ENCODE measurements at regions of chr3 and their contacts with region 1.

Region 1: DNA sequence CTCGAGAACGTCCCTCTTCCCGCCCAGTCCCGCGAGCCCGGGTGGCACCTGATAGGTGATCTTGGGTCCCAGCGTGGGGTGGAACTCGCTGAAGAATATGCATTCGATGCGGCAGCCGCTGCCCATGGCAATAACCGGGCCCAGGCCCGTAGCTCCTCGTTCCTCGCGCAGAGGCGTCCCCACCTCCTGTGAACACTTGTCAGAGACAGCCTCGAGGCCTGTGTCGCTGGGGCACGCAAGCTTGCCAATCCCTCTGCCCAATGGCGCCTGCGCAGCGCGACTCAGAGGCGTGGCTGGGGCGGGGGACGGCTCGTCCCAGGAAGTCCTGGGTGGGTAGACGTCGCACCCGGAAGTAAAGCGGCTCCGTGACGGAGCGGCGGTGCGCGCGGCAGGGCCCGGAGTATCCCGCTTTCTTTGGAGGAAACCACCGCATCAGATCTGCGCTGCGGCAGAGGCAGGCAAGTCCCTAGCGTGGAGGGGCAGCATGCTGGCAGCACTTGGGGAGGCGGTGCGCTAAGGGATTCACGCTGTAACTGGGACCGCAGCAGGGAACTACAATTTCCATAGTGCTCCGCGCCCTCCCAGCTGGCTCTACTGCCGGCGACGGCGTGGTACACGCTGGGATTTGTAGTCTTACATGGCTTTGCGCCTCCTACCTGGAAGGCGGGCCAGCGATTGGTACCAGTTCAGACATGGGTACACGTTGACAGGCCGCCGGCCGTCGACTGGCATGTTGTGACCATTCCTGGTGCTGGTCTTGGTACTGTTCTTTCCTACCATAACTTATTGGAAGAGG is at the starts of genes CYB561D2 and NPRL2:
- DNase-seq: peak; percentile 90
- ATAC-seq: peak; percentile 91
- H3K4me3 ChIP-seq: peak within 1 kb of the TSS; percentile 68 to 85 (median 77)
- H3K27ac ChIP-seq: peak within 1 kb of the TSS; percentile 65
- H3K4me1 ChIP-seq: peaks cover 58% of the 10 kb centered on the region
- H3K27me3 ChIP-seq: no peaks in the 10 kb centered on the region
- CTCF ChIP-seq: peak; percentile 4
- EP300 ChIP-seq: no peak; a peak in 1 of 4 replicates
- POLR2A ChIP-seq: peak in 1 of 2 experiments; percentile 72; a peak in 2 of 4 replicates
- RAD21 ChIP-seq: peak; percentile 52
- total RNA-seq, gene CYB561D2: 9.1 and 17.2 TPM in 2 replicates
- total RNA-seq, gene NPRL2: 25.3 and 30.6 TPM in 2 replicates

Region 2: GRCh38 chr3:50327943-50328691 is 22.6 kb before region 1 on chr3 and contains the start of gene TUSC2:
- CTCF ChIA-PET with region 1: no interaction called
- POLR2A ChIA-PET with region 1: interaction called, 10 read pairs
- in situ Hi-C with region 1: no loop called
- intact Hi-C with region 1: no loop called
- DNase-seq: peak; percentile 95
- ATAC-seq: peak; percentile 79
- H3K4me3 ChIP-seq: peak within 1 kb of the TSS; percentile 79 to 95 (median 92)
- H3K27ac ChIP-seq: peak within 1 kb of the TSS; percentile 67
- H3K4me1 ChIP-seq: peaks cover 52% of the 10 kb centered on the region
- H3K27me3 ChIP-seq: no peaks in the 10 kb centered on the region
- CTCF ChIP-seq: no peak; the same call in 1 of the 2 replicates
- EP300 ChIP-seq: no peak
- POLR2A ChIP-seq: peak in 1 of 2 experiments; percentile 80; a peak in 2 of 4 replicates
- RAD21 ChIP-seq: peak; percentile 39; the same call in 1 of the 2 replicates
- total RNA-seq, gene TUSC2: 35.9 and 36.7 TPM in 2 replicates

Region 3: DNA sequence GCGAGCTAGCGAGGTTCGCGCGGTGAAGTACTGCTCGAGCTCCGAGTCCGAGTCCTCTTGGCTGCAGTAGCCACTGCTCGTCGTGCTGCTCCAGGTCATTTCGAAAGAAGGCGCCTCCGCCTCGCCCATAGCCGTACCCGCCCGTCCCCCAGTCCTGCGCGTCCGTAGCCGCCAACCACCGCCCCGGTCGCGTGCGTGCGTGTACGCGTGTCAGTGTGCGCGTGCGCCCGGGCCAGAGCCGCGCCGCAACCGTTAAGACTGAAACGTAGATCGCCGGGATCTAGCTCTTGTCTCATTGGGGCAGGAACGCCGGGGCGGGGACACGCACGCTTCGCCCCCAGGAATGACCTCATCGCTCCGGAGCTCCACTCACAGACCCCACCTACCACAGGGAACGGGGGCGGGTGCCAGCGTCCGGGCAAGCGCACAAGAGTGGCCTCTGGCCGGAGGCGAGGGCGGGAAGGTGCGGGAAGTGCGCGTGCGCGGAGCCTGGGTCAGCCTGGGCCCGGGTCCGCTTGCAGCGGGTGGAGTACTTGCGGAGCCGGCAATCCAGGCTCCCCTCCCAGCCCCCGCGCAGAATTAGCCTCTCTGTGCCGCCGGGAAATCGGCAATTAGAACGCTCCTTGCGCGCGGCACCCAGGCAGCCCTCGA is 13.4 kb before region 1 on chr3:
- CTCF ChIA-PET with region 1: no interaction called
- POLR2A ChIA-PET with region 1: interaction called, 60 read pairs
- in situ Hi-C with region 1: no loop called
- intact Hi-C with region 1: no loop called
- DNase-seq: peak; percentile 98
- ATAC-seq: peak; percentile 89
- H3K4me3 ChIP-seq: peak overlapping the region; percentile 86 to 89 (median 88); a peak in 5 of 6 replicates
- H3K27ac ChIP-seq: peak overlapping the region; percentile 85
- H3K4me1 ChIP-seq: peaks cover 58% of the 10 kb centered on the region
- H3K27me3 ChIP-seq: peaks cover 1 to 2% of the 10 kb centered on the region in 2 experiments; a peak in 1 of 5 replicates
- CTCF ChIP-seq: peak; percentile 2; the same call in 1 of the 2 replicates
- EP300 ChIP-seq: no peak
- POLR2A ChIP-seq: peak in 1 of 2 experiments; percentile 61; a peak in 2 of 4 replicates
- RAD21 ChIP-seq: no peak; the same call in 1 of the 2 replicates

Region 4: DNA sequence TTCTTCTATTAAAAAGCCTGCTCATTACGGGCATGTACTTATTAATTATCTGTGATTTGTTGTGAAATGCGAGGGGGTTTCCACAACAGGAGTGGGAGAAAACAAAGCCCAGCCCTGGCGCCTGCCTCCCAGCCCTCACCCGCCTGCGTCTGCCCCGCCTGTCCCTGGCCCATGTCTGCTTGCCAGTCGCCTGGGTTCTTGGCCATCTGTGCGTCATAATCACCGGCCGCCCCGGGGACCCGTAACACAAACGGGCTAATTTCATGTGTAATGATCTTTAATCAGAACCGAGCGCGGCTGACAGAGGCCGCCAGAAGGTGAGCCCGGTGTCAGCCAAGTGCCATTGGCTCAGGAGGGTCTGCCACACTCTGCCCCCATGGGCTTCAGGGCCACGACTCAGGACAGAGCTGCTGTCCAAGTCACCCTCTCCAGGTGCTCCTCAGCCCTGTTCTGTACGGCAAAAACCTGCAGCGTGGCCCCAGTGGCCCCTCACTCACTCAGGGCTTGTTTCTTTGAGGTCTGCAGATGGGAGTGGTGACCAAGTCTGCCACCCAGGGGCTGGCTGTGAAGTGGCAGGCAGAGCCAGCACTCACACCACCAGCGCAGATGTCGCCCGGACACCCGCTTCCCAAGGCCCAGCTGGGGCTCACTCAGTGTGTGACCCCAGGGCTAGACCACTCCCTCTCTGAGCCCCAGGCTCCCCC is 37.4 kb after region 1 on chr3:
- CTCF ChIA-PET with region 1: interaction called, 9 read pairs
- POLR2A ChIA-PET with region 1: no interaction called
- in situ Hi-C with region 1: no loop called
- intact Hi-C with region 1: loop called (anchors 1 kb)
- DNase-seq: no peak
- ATAC-seq: peak; percentile 86
- H3K4me3 ChIP-seq: no peak overlapping the region
- H3K27ac ChIP-seq: no peak overlapping the region
- H3K4me1 ChIP-seq: peaks cover 9% of the 10 kb centered on the region
- H3K27me3 ChIP-seq: peaks cover 12 to 72% of the 10 kb centered on the region in 2 experiments
- CTCF ChIP-seq: peak; percentile 73
- EP300 ChIP-seq: no peak
- POLR2A ChIP-seq: no peak
- RAD21 ChIP-seq: peak; percentile 53; the same call in 1 of the 2 replicates

Region 5: DNA sequence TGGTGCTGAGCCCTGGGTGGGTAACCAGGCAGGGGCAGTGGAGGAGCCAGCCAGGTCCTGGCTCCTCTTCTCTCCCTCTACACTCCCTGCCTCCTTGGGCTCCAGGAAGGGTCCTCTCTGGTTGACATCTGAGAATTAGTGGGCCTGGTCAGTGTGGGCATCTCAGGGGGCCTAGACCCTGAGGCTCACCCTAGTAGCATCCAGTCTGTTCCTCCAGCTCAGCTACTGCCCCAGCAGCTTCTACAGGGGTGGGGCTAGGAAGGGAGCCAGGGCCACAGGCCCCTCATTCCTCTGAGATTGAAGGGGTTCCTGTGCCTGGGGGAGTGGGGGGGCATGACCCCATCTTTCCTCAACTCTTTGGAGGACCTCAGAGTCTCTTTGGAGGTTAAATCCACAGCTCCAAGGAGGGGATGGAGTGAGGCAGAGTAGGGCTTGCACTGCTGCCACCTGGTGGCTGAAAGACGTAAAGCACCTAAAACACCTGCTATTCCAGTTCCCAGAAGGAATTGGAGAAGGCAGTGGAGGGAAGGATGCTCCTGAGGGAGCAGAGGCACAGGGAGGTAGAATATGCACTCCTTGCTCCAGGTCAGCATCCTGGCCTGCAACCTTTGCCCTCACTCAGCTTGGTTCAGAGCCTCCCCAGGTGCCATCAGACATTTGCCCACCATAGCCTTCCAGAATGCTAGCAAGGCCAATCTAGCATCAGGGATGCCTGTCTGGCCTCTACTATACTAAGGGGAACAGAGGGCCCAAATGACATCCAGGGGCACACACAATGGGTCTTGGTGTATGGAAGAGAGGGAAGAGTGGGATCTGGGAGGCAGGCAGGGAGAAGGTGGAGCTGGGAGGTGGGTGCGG is 191.7 kb after region 1 on chr3:
- CTCF ChIA-PET with region 1: interaction called, 7 read pairs
- POLR2A ChIA-PET with region 1: no interaction called
- in situ Hi-C with region 1: loop called (anchors 10 kb)
- intact Hi-C with region 1: loop called (anchors 10 kb)
- DNase-seq: peak; percentile 40
- ATAC-seq: peak; percentile 77
- H3K4me3 ChIP-seq: no peak overlapping the region
- H3K27ac ChIP-seq: no peak overlapping the region
- H3K4me1 ChIP-seq: no peaks in the 10 kb centered on the region
- H3K27me3 ChIP-seq: peaks cover 0 to 27% of the 10 kb centered on the region in 2 experiments; a peak in 3 of 5 replicates
- CTCF ChIP-seq: peak; percentile 90
- EP300 ChIP-seq: no peak
- POLR2A ChIP-seq: no peak
- RAD21 ChIP-seq: peak; percentile 63

Measured in HepG2 (cell line).